ENCODE measurements at regions of chr1 and their contacts with region 1.

Region 1: DNA sequence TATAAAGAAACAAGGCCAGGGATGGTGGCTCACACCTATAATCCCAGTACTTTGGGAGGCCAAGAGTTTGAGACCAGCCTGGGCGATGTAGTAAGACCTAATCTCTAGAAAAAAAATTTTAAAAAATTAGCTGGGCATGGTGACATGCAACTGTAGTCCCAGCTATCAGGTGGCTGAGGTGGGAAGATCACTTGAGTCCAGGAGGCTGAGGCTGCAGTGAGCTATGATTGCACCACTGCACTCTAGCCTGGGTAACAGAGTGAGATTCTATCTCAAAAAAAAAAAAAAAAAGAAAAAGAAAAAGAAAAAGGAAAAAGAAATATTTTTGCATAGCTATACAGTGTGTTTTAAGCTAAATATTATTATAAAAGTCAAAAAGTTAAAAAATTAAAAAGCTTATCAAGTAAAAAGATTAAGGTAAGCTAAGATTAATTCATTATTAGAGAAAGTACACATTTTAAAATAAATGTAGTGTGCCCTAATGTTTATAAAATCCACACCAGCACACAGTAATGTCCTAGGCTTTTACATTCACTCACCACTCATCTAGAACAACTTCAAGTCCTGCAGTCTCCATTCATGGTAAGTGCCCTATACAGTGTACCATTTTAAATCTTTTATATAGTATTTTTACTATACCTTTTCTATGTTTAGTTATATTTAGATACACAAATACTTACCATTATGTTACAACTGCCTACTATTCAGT is 109.2 kb upstream of the HP1BP3 start:
- DNase-seq: no peak
- H3K4me3 ChIP-seq: no peak overlapping the region
- H3K27ac ChIP-seq: no peak overlapping the region
- H3K4me1 ChIP-seq: peaks cover 16% of the 10 kb centered on the region; the same call in 1 of the 2 replicates
- H3K27me3 ChIP-seq: no peaks in the 10 kb centered on the region
- CTCF ChIP-seq: no peak

Region 2: GRCh38 chr1:18962121-18962721 is 1934.1 kb before region 1 on chr1:
- CTCF ChIA-PET with region 1: no interaction called
- POLR2A ChIA-PET with region 1: interaction called, 16 read pairs
- intact Hi-C with region 1: no loop called
- DNase-seq: no peak
- H3K4me3 ChIP-seq: no peak overlapping the region
- H3K27ac ChIP-seq: no peak overlapping the region
- H3K4me1 ChIP-seq: peaks cover 16% of the 10 kb centered on the region
- H3K27me3 ChIP-seq: no peaks in the 10 kb centered on the region
- CTCF ChIP-seq: no peak

Region 3: GRCh38 chr1:20775700-20776099 is 120.6 kb before region 1 on chr1:
- CTCF ChIA-PET with region 1: no interaction called
- POLR2A ChIA-PET with region 1: interaction called, 10 read pairs
- intact Hi-C with region 1: no loop called
- DNase-seq: no peak
- H3K4me3 ChIP-seq: no peak overlapping the region
- H3K27ac ChIP-seq: no peak overlapping the region
- H3K4me1 ChIP-seq: no peaks in the 10 kb centered on the region
- H3K27me3 ChIP-seq: no peaks in the 10 kb centered on the region
- CTCF ChIP-seq: no peak

Region 4: DNA sequence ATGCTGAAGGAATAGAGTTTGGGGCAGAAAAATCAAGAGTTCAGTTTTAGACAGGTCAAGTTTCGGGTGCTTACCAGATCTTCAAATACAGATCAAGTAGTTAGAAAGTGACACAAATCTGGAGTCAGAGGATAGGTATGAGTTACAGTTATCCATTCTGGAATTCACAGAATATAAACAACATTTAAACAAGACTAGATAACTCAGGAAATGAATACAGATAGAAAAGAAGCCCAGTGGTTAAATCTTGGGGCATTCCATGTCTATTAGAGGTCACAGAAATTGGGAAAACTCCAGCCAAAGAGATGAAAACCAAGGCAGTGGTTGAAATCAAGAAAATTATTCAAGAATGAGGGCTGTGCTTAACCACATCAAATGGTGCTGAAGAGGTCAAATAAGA is 77.8 kb after region 1 on chr1:
- CTCF ChIA-PET with region 1: no interaction called
- POLR2A ChIA-PET with region 1: no interaction called
- intact Hi-C with region 1: no loop called
- DNase-seq: no peak
- H3K4me3 ChIP-seq: no peak overlapping the region
- H3K27ac ChIP-seq: no peak overlapping the region
- H3K4me1 ChIP-seq: no peaks in the 10 kb centered on the region
- H3K27me3 ChIP-seq: no peaks in the 10 kb centered on the region
- CTCF ChIP-seq: no peak

Measured in PC-9 (cell line).